Sigmoid colon (tissue), 7 donors: ENCODE measurements at regions of chr5 and their contacts with region 1.

Region 1: DNA sequence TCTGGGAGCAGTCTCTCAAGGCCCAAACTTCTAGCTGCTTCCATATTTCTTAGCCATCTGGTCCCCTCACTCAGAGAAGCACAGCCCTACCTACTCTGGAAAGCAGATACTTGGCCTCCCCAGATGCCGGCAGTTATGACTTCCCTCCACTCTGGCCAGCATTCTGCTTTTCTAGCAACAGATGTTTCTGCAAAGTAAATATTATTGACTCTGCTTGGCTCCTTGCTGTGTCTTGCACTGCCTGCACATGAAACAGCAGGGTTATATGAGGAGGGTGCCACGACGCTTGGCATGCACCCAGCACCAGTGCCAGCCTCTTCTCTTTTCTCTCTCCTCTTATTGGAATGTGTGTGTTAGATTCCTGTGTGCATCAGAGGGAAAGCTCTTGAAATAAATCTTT is 99.7 kb downstream of the ARHGAP26 start:
- DNase-seq: peak; percentile 75
- H3K4me3 ChIP-seq: no peak overlapping the region
- H3K27ac ChIP-seq: peak overlapping the region in 3 of 4 donors; percentile 5 to 51 (median 46)
- H3K4me1 ChIP-seq: peaks cover 0 to 40% (median 22%) of the 10 kb centered on the region in 4 donors
- H3K27me3 ChIP-seq: no peaks in the 10 kb centered on the region
- CTCF ChIP-seq: no peak
- EP300 ChIP-seq: no peak
- POLR2A ChIP-seq: no peak

Region 2: DNA sequence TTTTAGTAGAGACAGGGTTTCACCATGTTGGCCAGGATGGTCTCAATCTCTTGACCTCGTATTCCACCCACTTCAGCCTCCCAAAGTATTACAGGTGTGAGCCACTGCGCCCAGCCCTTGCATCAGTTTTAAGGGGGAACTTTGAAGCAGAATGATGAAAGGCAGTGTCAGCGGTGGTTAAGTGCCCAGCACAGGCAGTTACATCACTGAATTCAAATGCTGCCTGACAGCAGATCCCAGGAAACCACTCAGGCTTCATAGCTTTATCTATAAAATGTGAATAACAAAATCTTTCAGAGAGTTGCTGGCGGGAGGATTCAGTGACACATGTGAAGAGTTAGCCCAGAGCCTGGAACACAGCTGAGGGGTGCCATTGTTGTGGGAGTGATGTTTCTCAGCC is 210.5 kb before region 1 on chr5:
- intact Hi-C with region 1: no loop called
- DNase-seq: no peak
- H3K4me3 ChIP-seq: no peak overlapping the region
- H3K27ac ChIP-seq: peak overlapping the region in 1 of 4 donors; percentile 47
- H3K4me1 ChIP-seq: peaks cover 0 to 13% (median 8%) of the 10 kb centered on the region in 4 donors
- H3K27me3 ChIP-seq: no peaks in the 10 kb centered on the region
- CTCF ChIP-seq: no peak
- EP300 ChIP-seq: no peak
- POLR2A ChIP-seq: no peak

Region 3: DNA sequence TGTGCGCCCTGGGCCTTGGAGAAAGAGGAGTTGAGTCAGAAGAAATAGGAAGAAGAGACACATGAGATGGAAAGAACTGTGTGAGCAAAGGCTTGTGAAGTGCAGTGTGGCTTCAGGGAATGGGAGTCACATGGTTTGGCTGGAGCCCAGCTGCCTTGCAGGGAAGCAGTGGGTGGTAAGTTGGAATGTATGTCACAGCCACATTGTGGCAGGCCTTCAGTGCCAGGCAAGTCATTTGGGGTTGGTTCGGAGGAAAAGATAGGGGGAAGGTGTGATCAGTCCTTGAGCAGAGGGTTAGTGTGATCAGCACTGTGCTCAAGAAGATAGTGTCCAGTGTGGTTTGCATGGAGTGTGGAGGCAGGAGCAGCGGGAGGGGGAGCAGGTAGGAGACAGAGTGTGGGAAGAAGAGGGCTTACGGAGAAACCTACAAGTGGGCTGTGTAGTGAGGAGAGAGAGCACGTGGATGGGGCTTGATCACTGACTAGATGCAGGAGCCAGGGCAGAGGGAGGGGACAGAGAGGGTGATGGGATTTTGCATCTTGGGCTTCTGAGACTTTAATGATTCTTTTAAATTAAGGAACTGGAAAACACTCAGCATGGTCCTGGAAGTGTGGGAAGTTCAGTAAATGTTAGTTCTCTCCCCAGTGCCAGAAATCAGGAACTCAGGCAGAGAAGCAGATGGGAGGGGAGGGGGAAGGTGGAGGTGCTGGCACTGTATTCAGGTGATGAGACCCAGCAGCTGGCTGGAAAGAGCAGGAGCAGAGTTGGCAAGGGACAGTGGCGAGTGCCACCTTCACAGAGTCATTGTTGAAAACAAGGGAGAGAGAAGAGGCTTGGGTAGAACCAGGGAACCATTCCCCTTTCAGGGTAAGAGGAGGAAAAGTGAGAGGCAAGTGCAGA is 53.1 kb before region 1 on chr5:
- intact Hi-C with region 1: loop called (anchors 5 kb)
- DNase-seq: no peak
- H3K4me3 ChIP-seq: no peak overlapping the region
- H3K27ac ChIP-seq: peak overlapping the region; percentile 5 to 66 (median 42)
- H3K4me1 ChIP-seq: peaks cover 0 to 44% (median 37%) of the 10 kb centered on the region in 4 donors
- H3K27me3 ChIP-seq: no peaks in the 10 kb centered on the region
- CTCF ChIP-seq: no peak
- EP300 ChIP-seq: no peak
- POLR2A ChIP-seq: no peak